ENCODE measurements at regions of chr2 and their contacts with region 1.

Region 1: DNA sequence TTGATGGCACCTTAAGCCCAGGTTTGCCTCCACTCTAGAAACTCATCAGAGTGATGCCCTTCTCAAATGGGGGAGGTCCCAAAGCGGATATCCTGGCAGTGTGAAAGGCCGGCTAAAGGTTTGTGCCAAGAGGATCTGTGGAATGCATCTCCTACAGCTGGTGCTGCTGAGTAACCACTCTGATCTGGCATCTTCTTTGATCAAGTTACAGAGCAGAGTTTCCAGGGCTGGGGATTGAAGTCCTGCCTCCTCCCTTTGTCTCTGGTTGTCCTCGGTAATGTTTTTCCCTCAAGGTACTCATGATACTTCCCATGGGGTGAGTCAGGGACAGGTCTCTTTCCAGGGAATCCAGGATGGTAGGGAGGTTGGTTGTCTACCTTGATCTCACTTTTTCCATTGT is 24.6 kb downstream of the PRKRA start:
- DNase-seq: no peak
- ATAC-seq: no peak
- H3K4me3 Mint-ChIP-seq: no peak overlapping the region
- H3K27ac Mint-ChIP-seq: no peak overlapping the region
- H3K4me1 Mint-ChIP-seq: peaks cover 2% of the 10 kb centered on the region
- H3K27me3 Mint-ChIP-seq: no peaks in the 10 kb centered on the region

Region 2: DNA sequence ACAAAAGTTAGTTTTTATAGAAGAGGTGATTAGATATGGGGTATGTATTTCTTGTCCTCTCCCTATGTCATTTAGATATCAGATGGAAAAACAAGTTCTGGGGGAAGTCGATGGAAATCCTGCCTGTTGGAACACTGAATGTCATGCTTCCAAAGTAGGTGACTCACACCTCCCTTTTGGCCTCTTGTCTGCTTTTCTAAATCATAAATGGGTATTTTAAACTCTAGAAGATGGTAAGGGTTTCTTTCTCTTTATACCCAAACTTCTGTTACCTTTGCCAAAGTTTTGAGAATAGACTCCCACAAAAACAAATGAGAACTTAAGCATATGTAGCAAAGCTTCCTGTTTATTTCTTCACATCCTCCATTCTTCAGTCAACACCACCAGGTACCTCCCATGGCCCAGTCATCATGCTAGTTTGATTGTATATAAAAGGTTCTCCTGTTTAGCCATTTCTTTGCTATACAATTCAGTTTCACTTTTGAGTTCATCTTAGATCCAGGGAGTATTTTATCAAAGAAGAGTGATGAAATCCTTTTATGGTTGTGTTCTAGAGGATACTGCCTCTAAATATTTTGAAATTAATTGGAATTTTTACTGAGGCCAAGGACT is 39.3 kb before region 1 on chr2:
- CTCF ChIA-PET with region 1: no interaction called
- POLR2A ChIA-PET with region 1: no interaction called
- DNase-seq: no peak
- ATAC-seq: no peak
- H3K4me3 Mint-ChIP-seq: no peak overlapping the region
- H3K27ac Mint-ChIP-seq: no peak overlapping the region
- H3K4me1 Mint-ChIP-seq: peaks cover 6% of the 10 kb centered on the region
- H3K27me3 Mint-ChIP-seq: peaks cover 10% of the 10 kb centered on the region

Region 3: GRCh38 chr2:178404368-178404767 is 22.0 kb before region 1 on chr2:
- CTCF ChIA-PET with region 1: no interaction called
- POLR2A ChIA-PET with region 1: no interaction called
- DNase-seq: peak; percentile 44
- ATAC-seq: peak; percentile 84
- H3K4me3 Mint-ChIP-seq: peak overlapping the region; percentile 34
- H3K27ac Mint-ChIP-seq: peak overlapping the region; percentile 84
- H3K4me1 Mint-ChIP-seq: peaks cover 18% of the 10 kb centered on the region
- H3K27me3 Mint-ChIP-seq: peaks cover 11% of the 10 kb centered on the region

Region 4: GRCh38 chr2:178450774-178451525 is 24.6 kb after region 1 on chr2 and contains the starts of genes PJVK and PRKRA:
- CTCF ChIA-PET with region 1: interaction called, 10 read pairs
- POLR2A ChIA-PET with region 1: interaction called, 3 read pairs
- DNase-seq: peak; percentile 96
- ATAC-seq: peak; percentile 92
- H3K4me3 Mint-ChIP-seq: peak within 1 kb of the TSS; percentile 88
- H3K27ac Mint-ChIP-seq: peak within 1 kb of the TSS; percentile 93
- H3K4me1 Mint-ChIP-seq: peaks cover 30% of the 10 kb centered on the region
- H3K27me3 Mint-ChIP-seq: peaks cover 3% of the 10 kb centered on the region
- total RNA-seq, gene PJVK: 0.50 to 0.99 TPM
- total RNA-seq, gene PRKRA: 41.2 to 41.8 TPM